Lower leg skin (tissue), 4 donors: ENCODE measurements at regions of chr3 and their contacts with region 1.

Region 1: DNA sequence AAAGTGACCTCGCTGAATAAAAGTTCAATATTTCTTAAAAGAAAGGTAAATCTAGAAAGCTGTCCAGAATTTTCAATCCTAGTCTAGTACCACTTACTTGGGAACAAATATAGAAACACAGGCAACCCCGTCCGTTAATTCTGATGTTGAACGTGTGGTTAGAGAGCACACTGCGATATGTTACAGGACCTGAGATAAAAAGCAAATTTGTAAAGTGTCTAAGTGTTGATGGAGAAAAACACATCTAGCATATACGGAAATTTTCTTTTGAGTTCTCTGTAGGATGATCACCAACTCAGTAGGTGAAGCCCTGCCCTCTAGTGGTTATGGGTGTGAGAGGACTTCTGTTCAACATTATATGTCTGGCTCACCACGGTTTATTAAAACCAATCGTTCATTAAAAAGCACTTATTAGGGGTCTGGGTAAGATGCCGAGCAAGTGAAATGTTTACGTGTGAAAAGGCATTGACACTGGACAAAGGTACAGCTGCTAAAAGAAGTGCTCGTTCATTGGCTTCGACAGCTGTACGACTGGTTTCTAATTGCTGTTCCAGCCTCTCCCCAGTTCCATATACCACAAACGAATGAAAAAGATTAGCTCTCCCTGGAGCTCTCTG is 1.0 kb upstream of the ATP2C1 start:
- DNase-seq: peak in 1 of 2 donors; percentile 71
- H3K4me3 ChIP-seq: peak overlapping the region; percentile 98
- CTCF ChIP-seq: peak in 1 of 3 donors; percentile 80
- POLR2A ChIP-seq: no peak

Region 2: DNA sequence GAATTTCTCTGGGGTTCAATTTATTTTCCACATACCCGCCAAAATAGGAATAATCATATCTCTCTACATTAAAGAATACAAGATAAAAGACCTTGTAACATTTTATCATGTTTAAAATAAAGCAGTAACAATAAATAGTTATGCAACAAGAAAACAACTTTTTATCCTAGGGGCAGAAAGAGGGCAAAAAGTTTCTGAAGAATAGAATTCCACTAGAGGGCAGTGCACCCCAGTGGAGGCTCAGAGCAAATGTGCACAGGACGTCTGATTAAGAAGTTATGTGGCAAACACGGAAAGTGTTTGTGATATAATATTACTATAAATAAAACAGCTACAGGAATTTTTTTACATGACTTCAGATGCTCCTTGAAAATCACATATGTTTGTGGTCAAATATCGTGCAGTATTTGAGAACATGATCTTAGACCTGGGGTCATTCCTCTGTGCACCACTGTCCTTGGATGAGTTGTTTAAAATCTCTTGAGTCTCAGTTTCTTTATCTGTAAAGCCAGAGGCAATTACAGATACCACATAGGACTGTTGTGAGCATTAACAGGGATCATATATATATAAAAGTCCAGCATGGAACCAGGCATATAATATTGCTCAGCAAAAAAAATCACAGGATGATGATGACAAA is 133.0 kb before region 1 on chr3:
- intact Hi-C with region 1: loop called (anchors 5 kb)
- DNase-seq: peak in 1 of 2 donors; percentile 43
- H3K4me3 ChIP-seq: no peak overlapping the region
- CTCF ChIP-seq: no peak
- POLR2A ChIP-seq: no peak

Region 3: DNA sequence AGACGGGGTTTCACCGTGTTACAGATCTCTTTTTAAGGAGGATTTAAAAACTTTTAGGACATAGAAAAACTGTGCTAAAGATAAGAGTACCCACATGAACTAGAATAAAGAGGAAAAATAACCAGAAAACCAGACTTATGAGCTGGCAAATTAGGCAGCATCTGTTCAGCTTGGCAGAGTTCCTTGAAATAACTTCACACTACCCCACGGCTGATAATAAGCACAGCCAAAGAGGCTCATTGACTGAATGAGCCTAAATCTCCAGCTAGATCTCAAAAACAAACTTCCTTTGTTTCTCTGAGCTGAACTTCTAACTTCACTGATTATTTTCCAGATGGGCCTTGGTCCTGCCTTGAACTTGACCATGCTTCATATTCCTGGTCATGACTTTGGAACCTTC is 119.5 kb before region 1 on chr3:
- intact Hi-C with region 1: loop called (anchors 5 kb)
- DNase-seq: no peak
- H3K4me3 ChIP-seq: no peak overlapping the region
- CTCF ChIP-seq: no peak
- POLR2A ChIP-seq: no peak